GM18951 (cell line): ENCODE measurements at regions of chr17 and their contacts with region 1.

Region 1: GRCh38 chr17:19766422-19767270 is 18.5 kb upstream of the ALDH3A1 start:
- POLR2A ChIP-seq: no peak

Region 2: DNA sequence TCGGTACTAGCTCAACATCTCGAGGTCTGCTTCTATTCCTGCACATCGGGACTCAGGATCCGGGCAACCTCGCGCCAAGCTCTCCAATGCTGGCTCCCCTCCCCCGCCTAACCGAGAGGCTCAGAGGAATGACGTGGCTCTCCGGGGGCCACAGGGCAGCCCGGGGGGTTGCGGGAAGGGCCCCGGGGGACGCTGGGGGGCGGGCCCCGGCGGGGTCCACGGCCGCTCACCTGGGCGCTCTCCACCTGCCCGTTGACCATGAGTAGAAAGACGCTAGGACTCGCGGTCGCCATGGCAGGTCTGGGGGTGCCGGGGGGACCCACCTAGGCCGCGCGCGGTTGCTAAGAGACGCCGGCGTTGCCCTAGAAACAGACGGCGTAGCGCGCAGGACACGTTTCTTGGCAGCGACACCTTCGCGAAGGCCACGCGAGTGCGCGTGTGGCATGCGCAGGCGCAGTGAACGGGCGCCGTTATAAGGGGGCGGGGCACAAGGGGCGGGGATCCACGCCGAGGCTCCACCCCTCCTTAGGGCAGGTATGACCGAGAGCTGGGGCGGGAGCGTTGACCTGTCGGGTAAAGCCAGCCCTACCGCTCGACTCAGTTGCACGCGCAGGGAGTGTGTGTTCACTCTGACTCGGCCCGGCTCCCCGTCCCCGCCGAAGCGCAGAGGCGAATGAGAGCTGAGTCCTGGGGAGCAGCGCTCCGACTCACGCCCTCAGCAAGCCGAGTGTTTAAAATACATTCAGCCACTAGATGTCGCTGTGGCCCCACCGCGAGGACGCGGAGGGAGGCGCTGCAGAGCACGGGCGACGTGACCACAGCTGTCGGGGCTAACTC is 404.2 kb before region 1 on chr17 and contains the start of gene B9D1:
- in situ Hi-C with region 1: loop called (anchors 25 kb)
- POLR2A ChIP-seq: peak; percentile 35

Region 3: GRCh38 chr17:19513897-19514488 is 252.7 kb before region 1 on chr17:
- in situ Hi-C with region 1: loop called (anchors 10 kb)
- POLR2A ChIP-seq: no peak